ENCODE measurements at regions of chrX and their contacts with region 1.

Region 1: GRCh38 chrX:19372170-19372546 is 28.4 kb downstream of the PDHA1 start:
- DNase-seq: peak; percentile 73
- CTCF ChIP-seq: peak; percentile 71

Region 2: DNA sequence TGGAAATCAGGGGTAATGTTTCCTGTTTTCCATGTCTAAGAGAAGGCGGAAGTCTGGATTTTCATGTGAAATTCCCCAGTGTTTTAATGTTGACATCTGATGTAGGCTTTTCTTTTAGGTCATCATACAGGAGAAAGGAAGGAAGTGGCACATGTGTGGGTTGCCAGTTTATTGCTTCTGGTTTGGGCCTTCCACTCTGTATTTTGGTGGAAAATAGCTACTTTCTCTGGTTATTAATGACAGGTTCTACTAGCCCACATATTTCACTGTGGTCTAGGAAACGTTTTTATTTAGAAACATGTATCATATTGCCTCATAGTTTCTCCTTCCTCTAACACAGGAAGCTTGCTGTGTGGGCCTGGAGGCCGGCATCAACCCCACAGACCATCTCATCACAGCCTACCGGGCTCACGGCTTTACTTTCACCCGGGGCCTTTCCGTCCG is 21.2 kb before region 1 on chrX:
- CTCF ChIA-PET with region 1: interaction called, 15 read pairs
- POLR2A ChIA-PET with region 1: no interaction called
- DNase-seq: peak; percentile 58
- CTCF ChIP-seq: no peak

Region 3: GRCh38 chrX:19358526-19358925 is 13.6 kb before region 1 on chrX:
- CTCF ChIA-PET with region 1: interaction called, 15 read pairs
- POLR2A ChIA-PET with region 1: no interaction called
- DNase-seq: no peak
- CTCF ChIP-seq: no peak

Region 4: GRCh38 chrX:19382555-19383145 is 10.5 kb after region 1 on chrX:
- CTCF ChIA-PET with region 1: interaction called, 21 read pairs
- POLR2A ChIA-PET with region 1: no interaction called
- DNase-seq: peak; percentile 60
- CTCF ChIP-seq: peak; percentile 67

Region 5: GRCh38 chrX:19487520-19488200 is 115.5 kb after region 1 on chrX:
- CTCF ChIA-PET with region 1: no interaction called
- POLR2A ChIA-PET with region 1: no interaction called
- DNase-seq: no peak
- CTCF ChIP-seq: no peak